Activated CD4-positive, alpha-beta T cell treated with anti-CD3 and anti-CD28 coated beads for 36 hours (primary cell): ENCODE measurements at regions of chr17 and their contacts with region 1.

Region 1: GRCh38 chr17:7004398-7005253 is 7.8 kb upstream of the RNASEK start:
- DNase-seq: peak; percentile 37
- ATAC-seq: peak; percentile 99
- H3K4me3 Mint-ChIP-seq: no peak overlapping the region
- H3K27ac Mint-ChIP-seq: no peak overlapping the region
- H3K4me1 Mint-ChIP-seq: peaks cover 20% of the 10 kb centered on the region
- H3K27me3 Mint-ChIP-seq: no peaks in the 10 kb centered on the region

Region 2: GRCh38 chr17:6786618-6787017 is 218.0 kb before region 1 on chr17:
- CTCF ChIA-PET with region 1: no interaction called
- POLR2A ChIA-PET with region 1: no interaction called
- intact Hi-C with region 1: no loop called
- DNase-seq: no peak
- ATAC-seq: no peak
- H3K4me3 Mint-ChIP-seq: no peak overlapping the region
- H3K27ac Mint-ChIP-seq: no peak overlapping the region
- H3K4me1 Mint-ChIP-seq: peaks cover 3% of the 10 kb centered on the region
- H3K27me3 Mint-ChIP-seq: peaks cover 32% of the 10 kb centered on the region

Region 3: DNA sequence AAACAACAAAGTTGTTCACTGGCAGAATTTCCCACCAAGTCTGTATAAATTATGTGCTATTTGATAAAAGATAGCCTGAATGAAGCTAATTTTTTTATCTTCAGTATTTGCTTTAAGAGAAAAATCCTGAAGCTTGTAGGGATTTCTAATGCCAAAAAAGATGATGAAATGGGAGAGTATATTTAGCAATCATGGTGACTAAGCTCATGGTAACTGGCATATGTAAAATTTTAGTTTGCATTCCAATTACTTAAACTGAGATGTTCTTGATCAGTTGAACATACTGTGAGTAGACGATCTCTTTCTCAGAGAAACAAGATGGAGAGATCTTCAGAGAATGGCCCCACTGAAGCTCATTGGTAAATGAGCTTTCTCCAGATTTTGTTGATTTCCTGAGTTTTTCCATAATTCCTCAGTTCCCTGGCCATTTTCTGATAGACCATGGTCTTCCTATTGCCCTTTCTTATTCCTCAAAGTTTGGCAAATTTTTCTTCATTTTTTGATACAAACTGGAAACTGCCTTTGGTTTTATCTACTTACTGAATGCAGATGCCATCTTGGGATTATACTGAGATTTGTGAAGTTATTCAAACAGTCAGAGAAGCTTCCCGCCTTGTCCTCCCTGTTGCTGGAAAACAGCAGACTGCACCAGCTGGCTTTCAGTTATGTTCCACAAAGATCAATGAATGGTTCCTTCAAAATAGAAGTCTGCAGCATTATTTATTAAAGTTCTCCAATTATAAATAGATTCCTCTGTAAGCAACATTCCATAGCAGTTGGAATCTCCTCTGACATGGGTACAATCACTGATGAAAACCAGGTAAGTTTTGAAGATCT is 77.1 kb before region 1 on chr17:
- CTCF ChIA-PET with region 1: interaction called, 14 read pairs
- POLR2A ChIA-PET with region 1: interaction called, 3 read pairs
- intact Hi-C with region 1: no loop called
- DNase-seq: no peak
- ATAC-seq: no peak
- H3K4me3 Mint-ChIP-seq: no peak overlapping the region
- H3K27ac Mint-ChIP-seq: no peak overlapping the region
- H3K4me1 Mint-ChIP-seq: peaks cover 20% of the 10 kb centered on the region
- H3K27me3 Mint-ChIP-seq: no peaks in the 10 kb centered on the region

Region 4: GRCh38 chr17:6969323-6969726 is 35.3 kb before region 1 on chr17:
- CTCF ChIA-PET with region 1: interaction called, 4 read pairs
- POLR2A ChIA-PET with region 1: no interaction called
- intact Hi-C with region 1: loop called in 1 of 2 experiments (anchors 5 kb)
- DNase-seq: no peak
- ATAC-seq: peak; percentile 69
- H3K4me3 Mint-ChIP-seq: no peak overlapping the region
- H3K27ac Mint-ChIP-seq: peak overlapping the region; percentile 82
- H3K4me1 Mint-ChIP-seq: peaks cover 15% of the 10 kb centered on the region
- H3K27me3 Mint-ChIP-seq: no peaks in the 10 kb centered on the region

Region 5: GRCh38 chr17:7021993-7022778 is 17.6 kb after region 1 on chr17:
- CTCF ChIA-PET with region 1: interaction called, 17 read pairs
- POLR2A ChIA-PET with region 1: no interaction called
- intact Hi-C with region 1: no loop called
- DNase-seq: peak; percentile 89
- ATAC-seq: peak; percentile 79
- H3K4me3 Mint-ChIP-seq: peak overlapping the region; percentile 44
- H3K27ac Mint-ChIP-seq: peak overlapping the region; percentile 55
- H3K4me1 Mint-ChIP-seq: peaks cover 43% of the 10 kb centered on the region
- H3K27me3 Mint-ChIP-seq: peaks cover 12% of the 10 kb centered on the region